Posterior vena cava (tissue), 2 donors: ENCODE measurements at regions of chr9 and their contacts with region 1.

Region 1: DNA sequence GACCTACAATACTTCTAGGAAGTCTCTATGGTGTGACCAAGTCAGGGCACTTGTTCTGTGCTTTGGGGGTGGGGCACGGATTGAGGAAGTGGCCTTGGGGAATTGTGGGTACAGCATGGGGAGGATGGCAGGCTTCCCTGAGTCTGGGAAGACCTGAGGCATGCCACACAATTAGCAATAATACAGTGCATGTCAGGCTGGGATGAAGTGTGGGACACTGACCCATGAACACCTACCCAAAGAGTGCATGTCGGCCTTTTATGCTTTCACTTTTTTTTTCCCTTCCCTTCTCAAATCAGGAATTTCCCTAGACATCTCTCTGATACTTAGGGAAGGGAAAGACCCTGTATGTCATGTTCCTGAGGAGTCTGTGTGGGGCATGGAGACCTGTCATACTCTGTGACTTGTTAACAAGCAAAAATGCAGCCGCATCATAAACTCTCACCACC is 146.4 kb downstream of the PALM2AKAP2 start:
- DNase-seq: no peak

Region 2: DNA sequence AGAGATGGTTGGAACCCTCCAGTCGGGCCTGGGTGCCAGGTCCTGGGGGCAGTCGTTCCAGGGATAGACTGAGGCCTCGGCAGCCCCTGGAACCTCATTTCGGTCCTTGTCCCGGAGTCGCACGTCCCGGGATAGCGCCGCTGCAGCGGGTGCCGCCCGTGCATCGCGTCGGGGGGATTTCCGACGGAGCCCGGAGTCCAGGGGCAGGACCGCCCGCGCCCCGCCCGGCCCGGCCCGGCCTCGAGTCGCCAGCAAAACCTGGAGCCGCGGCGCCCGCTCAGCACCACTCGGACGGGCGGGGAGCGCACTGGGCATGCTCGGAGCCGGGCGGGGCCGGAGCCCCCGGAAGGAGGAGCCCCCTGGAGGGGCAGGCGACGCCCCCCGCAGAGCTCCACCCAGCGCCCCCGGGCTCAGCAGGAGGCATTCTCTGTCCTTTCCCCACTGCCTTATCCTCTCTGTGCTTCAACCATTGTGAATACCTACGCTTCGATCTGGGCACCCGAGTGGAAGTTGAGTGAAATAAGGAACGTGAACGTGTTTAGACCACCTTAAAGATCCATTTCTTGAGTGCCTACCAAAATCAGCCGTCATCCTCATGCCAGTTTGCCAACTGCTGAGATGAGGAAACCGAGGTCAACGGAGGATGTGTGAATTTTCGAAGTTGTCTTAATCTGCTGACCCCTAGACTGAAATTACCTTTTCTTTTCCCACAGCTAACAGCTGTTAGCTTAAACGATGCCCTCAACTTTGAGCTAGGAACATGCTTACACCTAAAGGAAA is 426.6 kb before region 1 on chr9:
- intact Hi-C with region 1: no loop called
- DNase-seq: peak; percentile 84

Region 3: DNA sequence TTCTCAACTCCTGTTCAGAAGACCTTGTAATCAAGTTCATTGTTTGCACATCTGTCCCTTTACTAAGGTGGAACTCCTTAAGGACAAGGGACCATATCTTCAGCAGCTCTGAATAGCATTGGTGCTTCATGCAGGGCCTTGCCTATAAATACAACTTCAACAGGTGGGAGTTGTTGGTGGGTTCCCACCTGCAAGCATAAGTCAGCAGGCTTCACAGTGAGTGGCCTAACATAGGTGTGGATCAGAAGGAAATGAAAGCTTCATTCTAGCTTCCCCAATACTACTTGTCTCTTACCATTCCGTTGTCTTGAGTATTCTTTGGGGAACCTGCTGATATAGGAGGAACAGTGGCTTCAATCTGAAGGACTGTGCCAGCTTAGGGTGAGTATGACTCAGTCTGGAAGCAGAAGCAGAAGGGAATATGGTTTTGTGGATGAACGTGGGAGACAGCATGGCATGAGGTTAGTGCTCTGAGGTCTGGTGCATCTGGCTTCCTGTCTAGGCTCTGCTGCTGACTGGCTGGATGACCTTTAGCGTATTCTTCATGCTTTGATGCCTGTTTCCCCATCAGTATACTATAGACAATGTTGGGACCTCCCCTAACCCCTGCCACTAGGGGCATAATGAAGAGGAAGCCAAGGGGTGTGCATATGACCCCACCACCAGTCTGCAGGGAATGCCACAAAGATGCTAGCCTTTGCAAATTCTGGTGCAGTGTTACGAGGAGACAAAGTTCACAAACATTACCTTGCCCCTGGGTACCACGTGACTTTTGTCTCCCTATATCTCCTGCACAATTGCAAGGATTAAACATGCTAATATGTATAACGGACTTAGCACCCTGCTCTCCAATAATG is 45.8 kb after region 1 on chr9:
- intact Hi-C with region 1: loop called in 1 of 2 experiments (anchors 10 kb)
- DNase-seq: no peak